Activated CD4-positive, alpha-beta memory T cell treated with anti-CD3 and anti-CD28 coated beads for 36 hours (primary cell): ENCODE measurements at regions of chr17 and their contacts with region 1.

Region 1: GRCh38 chr17:37770631-37771518 is 26.0 kb upstream of the HNF1B start:
- DNase-seq: peak; percentile 62
- H3K4me3 Mint-ChIP-seq: no peak overlapping the region
- H3K27ac Mint-ChIP-seq: no peak overlapping the region
- H3K4me1 Mint-ChIP-seq: peaks cover 27% of the 10 kb centered on the region
- H3K27me3 Mint-ChIP-seq: peaks cover 12% of the 10 kb centered on the region

Region 2: GRCh38 chr17:37643118-37643766 is 127.6 kb before region 1 on chr17 and contains the start of gene DDX52:
- CTCF ChIA-PET with region 1: interaction called, 5 read pairs
- POLR2A ChIA-PET with region 1: no interaction called
- intact Hi-C with region 1: loop called (anchors 5 kb)
- DNase-seq: peak; percentile 93
- H3K4me3 Mint-ChIP-seq: peak within 1 kb of the TSS; percentile 92
- H3K27ac Mint-ChIP-seq: peak within 1 kb of the TSS; percentile 78
- H3K4me1 Mint-ChIP-seq: peaks cover 23% of the 10 kb centered on the region
- H3K27me3 Mint-ChIP-seq: peaks cover 18% of the 10 kb centered on the region
- total RNA-seq, gene DDX52: 24.9 to 26.2 TPM

Region 3: GRCh38 chr17:37657202-37657601 is 113.7 kb before region 1 on chr17:
- CTCF ChIA-PET with region 1: no interaction called
- POLR2A ChIA-PET with region 1: no interaction called
- intact Hi-C with region 1: no loop called
- DNase-seq: no peak
- H3K4me3 Mint-ChIP-seq: no peak overlapping the region
- H3K27ac Mint-ChIP-seq: no peak overlapping the region
- H3K4me1 Mint-ChIP-seq: no peaks in the 10 kb centered on the region
- H3K27me3 Mint-ChIP-seq: peaks cover 1% of the 10 kb centered on the region

Region 4: DNA sequence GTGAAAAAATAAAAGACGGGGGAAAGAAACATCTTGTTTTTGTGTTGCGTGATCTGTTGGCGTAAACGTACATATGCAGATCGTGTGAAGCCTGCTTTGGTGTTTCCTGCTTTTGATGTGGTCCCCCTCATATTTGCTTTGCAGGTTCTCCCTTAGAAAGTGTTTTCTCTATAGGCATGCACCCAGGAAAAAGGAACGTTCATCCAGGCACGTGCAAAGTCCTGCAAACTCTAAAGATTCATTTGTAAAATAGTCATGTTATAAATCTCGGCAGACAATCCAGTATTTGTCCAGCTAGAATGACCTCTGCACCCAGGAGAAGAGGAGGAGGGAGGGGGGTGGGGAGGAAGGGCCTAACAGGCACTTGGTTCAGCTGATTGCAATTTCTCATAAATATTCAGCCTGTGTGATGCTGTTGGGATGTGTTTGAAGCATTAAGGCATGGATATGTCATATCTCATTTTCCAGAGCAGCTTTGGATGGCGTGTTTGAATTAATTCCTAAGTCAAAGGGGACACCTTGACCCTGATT is 87.4 kb before region 1 on chr17:
- CTCF ChIA-PET with region 1: no interaction called
- POLR2A ChIA-PET with region 1: no interaction called
- intact Hi-C with region 1: no loop called
- DNase-seq: no peak
- H3K4me3 Mint-ChIP-seq: no peak overlapping the region
- H3K27ac Mint-ChIP-seq: no peak overlapping the region
- H3K4me1 Mint-ChIP-seq: peaks cover 2% of the 10 kb centered on the region
- H3K27me3 Mint-ChIP-seq: peaks cover 3% of the 10 kb centered on the region

Region 5: DNA sequence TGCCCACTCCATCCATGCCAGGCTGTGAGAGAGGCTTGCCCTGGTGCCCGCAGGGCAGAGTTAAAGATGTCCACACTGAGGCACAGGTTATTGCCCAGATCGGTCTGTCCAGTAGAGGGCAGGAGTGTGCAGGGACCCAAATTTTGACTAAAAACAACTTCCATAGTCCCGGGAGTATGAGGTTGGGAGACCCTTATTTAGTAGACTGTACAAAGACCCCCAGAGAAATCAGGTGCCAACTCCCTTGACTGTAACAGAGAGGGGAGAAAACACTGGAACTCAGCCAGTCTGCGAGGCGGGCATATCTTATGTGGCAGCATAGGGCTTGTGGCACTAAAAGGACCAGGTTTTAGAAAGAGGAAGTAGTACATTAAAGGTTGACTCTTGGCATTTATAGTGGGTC is 69.4 kb before region 1 on chr17:
- CTCF ChIA-PET with region 1: interaction called, 4 read pairs
- POLR2A ChIA-PET with region 1: interaction called, 3 read pairs
- intact Hi-C with region 1: loop called (anchors 5 kb)
- DNase-seq: peak; percentile 68
- H3K4me3 Mint-ChIP-seq: no peak overlapping the region
- H3K27ac Mint-ChIP-seq: no peak overlapping the region
- H3K4me1 Mint-ChIP-seq: peaks cover 13% of the 10 kb centered on the region
- H3K27me3 Mint-ChIP-seq: peaks cover 26% of the 10 kb centered on the region

Region 6: GRCh38 chr17:37848690-37849616 is 78.1 kb after region 1 on chr17:
- CTCF ChIA-PET with region 1: interaction called, 3 read pairs
- POLR2A ChIA-PET with region 1: no interaction called
- intact Hi-C with region 1: loop called (anchors 5 kb)
- DNase-seq: peak; percentile 48
- H3K4me3 Mint-ChIP-seq: no peak overlapping the region
- H3K27ac Mint-ChIP-seq: no peak overlapping the region
- H3K4me1 Mint-ChIP-seq: peaks cover 14% of the 10 kb centered on the region
- H3K27me3 Mint-ChIP-seq: peaks cover 7% of the 10 kb centered on the region